HEK293 (cell line): ENCODE measurements at regions of chr10 and their contacts with region 1.

Region 1: DNA sequence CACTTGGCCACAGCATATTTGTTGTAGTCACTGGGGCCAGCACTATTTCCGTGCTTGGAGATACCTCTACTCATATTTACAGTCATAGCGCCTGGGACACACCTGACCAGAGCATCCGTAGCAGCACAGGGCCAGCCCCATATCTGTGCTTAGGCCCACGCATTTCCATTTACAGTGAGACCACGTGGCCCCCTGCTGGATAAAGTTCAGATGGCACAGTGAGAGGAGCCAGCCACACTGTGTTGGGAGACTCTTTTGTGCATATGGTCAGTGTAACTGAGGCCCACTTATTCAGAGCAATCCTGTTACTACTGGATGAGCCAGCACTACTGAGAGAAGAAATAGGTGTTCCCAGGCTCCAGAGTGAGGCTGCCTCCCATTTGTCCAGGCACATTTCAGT is 455.3 kb downstream of the REEP3 start:
- H3K4me3 ChIP-seq: no peak overlapping the region
- H3K27ac ChIP-seq: no peak overlapping the region
- H3K4me1 ChIP-seq: no peaks in the 10 kb centered on the region
- CTCF ChIP-seq: peak; percentile 57; the same call in 1 of the 2 replicates

Region 2: DNA sequence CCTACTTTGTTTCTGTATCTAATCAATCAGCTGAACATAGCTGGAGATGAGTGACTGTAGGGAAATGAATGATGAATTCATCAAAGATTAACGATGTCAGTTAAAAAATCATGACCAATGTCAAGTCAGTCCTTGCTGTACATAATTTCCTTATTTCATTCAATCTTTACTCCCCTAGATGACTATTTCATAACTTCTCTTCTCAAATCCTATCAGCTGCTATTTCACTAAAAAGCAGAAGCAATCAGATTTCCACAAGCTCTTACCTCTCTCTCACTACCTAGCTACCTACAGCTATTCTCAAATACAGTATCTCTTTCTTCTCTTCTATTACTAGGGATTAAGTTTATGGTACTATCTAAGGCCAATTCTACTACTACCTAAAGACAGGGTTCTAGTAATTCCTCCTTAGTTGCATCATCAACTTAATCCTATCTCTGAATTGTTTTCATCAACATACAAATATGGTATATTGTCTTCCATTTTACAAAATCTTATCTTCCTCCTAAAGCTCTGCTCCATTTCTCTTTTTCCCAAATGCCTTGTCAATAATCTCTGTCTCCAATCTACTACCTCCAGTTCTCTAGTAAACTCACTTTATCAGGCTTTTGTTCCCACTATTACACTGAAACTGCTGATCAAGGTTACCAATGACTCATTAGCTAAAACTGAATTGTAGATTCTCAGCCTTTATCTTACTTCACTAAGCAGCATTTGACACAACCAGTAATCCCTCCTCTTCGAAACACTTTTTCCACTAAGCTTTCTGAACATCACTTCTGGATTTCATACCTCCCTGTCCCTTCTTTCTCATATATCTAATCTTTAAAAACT is 539.2 kb before region 1 on chr10:
- CTCF ChIA-PET with region 1: no interaction called
- POLR2A ChIA-PET with region 1: no interaction called
- H3K4me3 ChIP-seq: no peak overlapping the region
- H3K27ac ChIP-seq: no peak overlapping the region
- H3K4me1 ChIP-seq: peaks cover 36% of the 10 kb centered on the region
- CTCF ChIP-seq: no peak

Region 3: DNA sequence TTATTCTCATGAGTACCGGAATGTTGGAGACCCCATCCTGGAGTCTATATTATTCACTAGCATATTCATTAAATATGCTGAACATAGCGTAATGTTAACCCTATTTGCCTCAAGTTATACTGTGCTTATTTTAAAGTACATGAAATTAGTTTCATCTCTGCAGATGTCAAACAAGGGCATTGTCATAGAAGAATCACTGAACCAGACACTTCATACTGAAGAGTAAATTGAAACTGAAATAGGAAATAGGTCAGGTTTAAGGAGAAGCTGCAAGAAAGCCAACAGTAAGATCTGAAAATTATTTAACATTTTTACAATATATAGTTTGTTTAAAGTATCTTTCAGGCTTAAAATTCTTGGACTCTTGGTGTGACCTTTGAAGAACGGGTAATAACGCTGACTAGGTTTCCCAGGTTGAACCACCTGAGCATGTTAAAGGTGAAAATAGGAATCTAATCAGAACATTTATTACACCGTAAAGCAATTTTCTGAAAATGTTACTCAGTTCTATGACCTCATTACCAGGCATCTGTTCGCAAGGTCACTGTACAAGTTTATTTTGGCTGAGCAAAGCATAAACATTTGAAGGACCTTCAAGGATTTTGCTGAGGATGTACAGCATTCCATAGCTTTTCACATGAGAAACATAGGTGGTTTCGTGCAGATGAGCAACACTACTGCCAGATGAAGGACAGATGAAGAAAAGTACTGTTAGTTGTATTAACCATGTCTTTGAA is 372.7 kb before region 1 on chr10:
- CTCF ChIA-PET with region 1: no interaction called
- POLR2A ChIA-PET with region 1: no interaction called
- H3K4me3 ChIP-seq: no peak overlapping the region
- H3K27ac ChIP-seq: no peak overlapping the region
- H3K4me1 ChIP-seq: peaks cover 14% of the 10 kb centered on the region
- CTCF ChIP-seq: no peak

Region 4: DNA sequence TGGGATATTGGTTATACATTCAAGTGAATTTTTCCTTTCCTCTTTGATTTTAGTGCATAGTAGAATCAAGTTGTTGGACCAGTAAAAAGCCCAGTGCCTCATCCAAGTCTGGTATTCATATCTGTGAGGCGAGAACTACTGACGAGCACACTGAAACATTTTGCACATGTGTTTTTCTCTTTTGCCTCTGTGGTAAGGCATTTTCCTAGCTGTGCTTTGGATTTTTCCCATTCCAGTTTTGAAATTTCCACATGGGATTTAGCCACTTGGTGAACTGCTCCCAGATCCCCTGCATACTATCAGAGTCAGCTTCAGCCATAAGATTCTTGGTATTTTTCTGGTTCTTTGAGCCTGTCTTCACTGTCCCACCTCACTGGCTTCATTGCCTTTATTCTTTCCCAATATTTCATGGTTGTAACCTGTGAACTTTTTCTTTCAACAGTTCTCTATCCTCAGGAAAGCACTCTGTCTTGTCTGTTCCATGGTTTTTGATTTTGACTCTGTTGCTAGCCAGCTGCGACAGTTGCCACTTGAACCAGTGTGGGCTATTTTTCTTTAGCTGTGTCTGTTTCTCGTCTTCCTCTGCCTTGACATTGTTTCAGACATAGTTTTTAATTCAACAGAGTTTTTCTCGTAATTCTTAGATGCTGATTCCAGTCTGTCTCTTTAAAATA is 216.4 kb before region 1 on chr10:
- CTCF ChIA-PET with region 1: no interaction called
- POLR2A ChIA-PET with region 1: no interaction called
- H3K4me3 ChIP-seq: no peak overlapping the region
- H3K27ac ChIP-seq: no peak overlapping the region
- H3K4me1 ChIP-seq: no peaks in the 10 kb centered on the region
- CTCF ChIP-seq: no peak

Region 5: DNA sequence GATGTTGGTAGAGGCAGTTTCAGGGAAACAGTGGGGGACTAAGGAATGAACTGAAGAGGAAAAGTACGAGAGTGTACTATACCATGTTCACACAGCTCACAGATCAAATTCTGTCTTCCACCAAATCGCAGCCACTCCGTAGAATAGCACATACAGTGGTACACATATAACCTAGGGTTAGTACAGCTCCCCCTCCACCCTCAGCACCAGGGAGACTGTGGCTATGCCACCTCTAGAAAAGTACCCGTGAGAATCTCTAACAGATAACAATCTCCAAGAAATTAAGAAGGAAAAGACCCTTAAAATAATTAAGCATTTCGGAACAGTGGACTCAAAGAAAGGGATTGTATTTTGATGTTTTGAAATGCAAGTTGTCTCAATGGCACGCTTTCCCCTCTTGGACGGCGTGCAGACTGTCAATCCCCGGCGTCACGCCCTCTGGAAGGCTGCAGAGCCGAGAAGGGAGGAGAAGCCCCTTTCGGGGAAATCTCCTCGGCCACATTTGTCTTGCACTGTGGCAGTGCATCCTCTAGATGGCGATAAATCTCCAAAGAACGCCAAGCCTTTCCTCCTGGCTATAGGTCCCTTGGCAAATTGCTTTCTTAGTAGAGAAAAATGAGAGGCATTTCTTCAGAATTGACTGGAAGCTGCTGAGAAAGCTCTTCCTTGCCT is 110.3 kb before region 1 on chr10:
- CTCF ChIA-PET with region 1: interaction called, 51 read pairs
- POLR2A ChIA-PET with region 1: interaction called, 4 read pairs
- H3K4me3 ChIP-seq: peak overlapping the region; percentile 3; the same call in 1 of the 2 replicates
- H3K27ac ChIP-seq: no peak overlapping the region
- H3K4me1 ChIP-seq: no peaks in the 10 kb centered on the region
- CTCF ChIP-seq: peak; percentile 63

Region 6: DNA sequence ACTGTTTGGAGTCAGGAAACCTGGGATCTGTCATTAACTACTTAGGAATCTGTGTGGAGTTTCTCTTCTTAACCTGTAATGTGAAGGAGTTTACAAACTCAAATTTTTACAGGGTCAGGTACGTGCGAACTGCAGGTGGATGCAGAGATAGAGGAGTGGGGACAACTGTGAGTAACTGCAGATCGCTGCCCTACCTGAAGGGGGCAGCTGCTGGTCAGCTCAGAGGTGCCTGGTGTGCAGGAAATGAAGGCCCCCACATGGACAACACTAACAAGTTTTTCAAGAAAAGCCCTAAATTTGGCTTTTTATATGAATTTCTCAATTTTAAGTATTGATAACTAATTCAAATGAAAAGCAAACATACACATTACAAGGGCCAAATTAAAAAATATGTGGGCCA is 75.3 kb before region 1 on chr10:
- CTCF ChIA-PET with region 1: interaction called, 14 read pairs
- POLR2A ChIA-PET with region 1: no interaction called
- H3K4me3 ChIP-seq: no peak overlapping the region
- H3K27ac ChIP-seq: no peak overlapping the region
- H3K4me1 ChIP-seq: no peaks in the 10 kb centered on the region
- CTCF ChIP-seq: no peak; the same call in 1 of the 2 replicates

Region 7: GRCh38 chr10:63965846-63966245 is 10.7 kb before region 1 on chr10:
- CTCF ChIA-PET with region 1: interaction called, 28 read pairs
- POLR2A ChIA-PET with region 1: no interaction called
- H3K4me3 ChIP-seq: no peak overlapping the region
- H3K27ac ChIP-seq: no peak overlapping the region
- H3K4me1 ChIP-seq: no peaks in the 10 kb centered on the region
- CTCF ChIP-seq: no peak

Region 8: GRCh38 chr10:63994371-63994770 is 17.8 kb after region 1 on chr10:
- CTCF ChIA-PET with region 1: interaction called, 10 read pairs
- POLR2A ChIA-PET with region 1: no interaction called
- H3K4me3 ChIP-seq: no peak overlapping the region
- H3K27ac ChIP-seq: no peak overlapping the region
- H3K4me1 ChIP-seq: no peaks in the 10 kb centered on the region
- CTCF ChIP-seq: no peak